ENCODE measurements at regions of chr4 and their contacts with region 1.

Region 1: GRCh38 chr4:76067652-76068286 is 6.7 kb upstream of the ART3 start:
- DNase-seq: peak; percentile 56 to 87
- ATAC-seq: peak; percentile 91

Region 2: GRCh38 chr4:75924309-75924827 is 143.4 kb before region 1 on chr4:
- intact Hi-C with region 1: no loop called
- DNase-seq: no peak
- ATAC-seq: no peak

Region 3: GRCh38 chr4:75995727-75996126 is 72.0 kb before region 1 on chr4:
- intact Hi-C with region 1: loop called (anchors 2 to 5 kb)
- DNase-seq: no peak
- ATAC-seq: peak; percentile 64

Region 4: GRCh38 chr4:76125816-76126215 is 58.0 kb after region 1 on chr4:
- intact Hi-C with region 1: no loop called
- DNase-seq: no peak
- ATAC-seq: no peak

Region 5: DNA sequence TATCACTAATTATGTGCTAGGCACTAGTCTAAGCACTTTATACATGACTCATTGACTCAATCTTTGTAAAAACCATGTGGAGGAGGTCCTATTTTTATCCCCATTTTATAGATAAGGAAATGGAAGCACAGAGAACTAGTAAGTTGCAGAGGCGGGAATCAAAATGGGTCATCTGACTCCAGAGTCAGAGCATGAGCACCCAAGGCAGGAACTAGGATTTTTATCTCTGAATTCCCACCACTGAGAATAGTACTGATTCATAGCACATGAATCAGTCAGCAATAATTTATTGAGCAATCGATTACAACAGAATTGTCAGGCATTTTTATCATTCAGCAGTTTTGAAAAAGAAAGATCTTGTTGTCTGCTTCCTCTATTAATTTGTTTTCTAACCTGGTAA is 126.6 kb after region 1 on chr4:
- intact Hi-C with region 1: no loop called
- DNase-seq: no peak
- ATAC-seq: no peak